Vagina (tissue), 2 donors: ENCODE measurements at regions of chrX and their contacts with region 1.

Region 1: DNA sequence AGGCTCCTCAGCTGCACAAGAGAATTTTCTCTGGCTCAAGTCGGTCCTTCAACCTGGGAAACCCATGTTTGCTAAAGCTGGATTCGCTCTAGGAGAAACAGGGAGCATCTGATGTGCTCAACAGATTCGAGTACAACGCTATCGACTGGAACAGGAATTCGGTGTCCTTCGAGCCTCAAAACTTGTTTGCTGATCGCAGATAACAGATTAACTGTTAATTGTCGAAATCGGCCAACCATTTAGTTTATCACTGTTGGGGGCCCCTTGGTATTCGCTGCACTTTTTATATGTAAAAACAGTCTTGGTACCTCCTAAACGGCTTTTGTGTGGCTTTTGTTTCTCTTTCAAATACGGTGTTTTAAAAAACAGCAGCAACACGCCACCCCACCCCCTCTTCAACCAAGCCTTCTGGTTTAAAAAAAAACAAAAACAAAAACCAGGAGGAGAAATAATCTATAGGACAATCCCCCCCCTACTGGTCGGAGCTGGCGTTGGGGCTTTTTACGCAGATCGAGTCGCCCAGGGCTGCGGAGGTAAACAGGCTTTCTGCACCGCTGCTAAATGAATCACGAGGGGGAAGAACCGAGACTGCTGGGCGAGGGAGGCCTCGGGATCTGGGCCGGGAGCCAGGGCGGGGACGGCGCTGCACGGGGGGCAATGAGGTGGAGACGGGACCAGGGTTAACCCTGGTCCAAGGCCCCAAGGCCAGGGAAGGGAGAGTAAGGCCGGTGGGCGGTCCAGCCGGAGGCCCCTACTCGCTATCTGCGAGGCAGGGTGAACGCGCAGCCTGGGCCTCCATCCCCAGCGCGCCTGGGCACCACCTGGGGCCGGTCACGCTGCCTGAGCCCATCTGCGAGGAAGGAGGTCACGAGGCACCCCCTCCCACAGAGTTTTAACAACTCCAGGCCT is 71.7 kb upstream of the BCOR start:
- DNase-seq: no peak
- H3K4me3 ChIP-seq: no peak overlapping the region
- H3K27ac ChIP-seq: peak overlapping the region; percentile 42
- H3K4me1 ChIP-seq: peaks cover 51% of the 10 kb centered on the region
- H3K27me3 ChIP-seq: no peaks in the 10 kb centered on the region
- CTCF ChIP-seq: no peak
- POLR2A ChIP-seq: no peak

Region 2: GRCh38 chrX:38192007-38192810 is 1977.2 kb before region 1 on chrX:
- intact Hi-C with region 1: no loop called
- DNase-seq: no peak
- H3K4me3 ChIP-seq: no peak overlapping the region
- H3K27ac ChIP-seq: no peak overlapping the region
- H3K4me1 ChIP-seq: no peaks in the 10 kb centered on the region
- H3K27me3 ChIP-seq: no peaks in the 10 kb centered on the region
- CTCF ChIP-seq: no peak
- POLR2A ChIP-seq: no peak

Region 3: GRCh38 chrX:40006106-40007017 is 163.1 kb before region 1 on chrX:
- intact Hi-C with region 1: loop called (anchors 5 kb)
- DNase-seq: no peak
- H3K4me3 ChIP-seq: peak overlapping the region; percentile 2 to 12
- H3K27ac ChIP-seq: no peak overlapping the region
- H3K4me1 ChIP-seq: peaks cover 21% of the 10 kb centered on the region
- H3K27me3 ChIP-seq: no peaks in the 10 kb centered on the region
- CTCF ChIP-seq: no peak
- POLR2A ChIP-seq: no peak

Region 4: DNA sequence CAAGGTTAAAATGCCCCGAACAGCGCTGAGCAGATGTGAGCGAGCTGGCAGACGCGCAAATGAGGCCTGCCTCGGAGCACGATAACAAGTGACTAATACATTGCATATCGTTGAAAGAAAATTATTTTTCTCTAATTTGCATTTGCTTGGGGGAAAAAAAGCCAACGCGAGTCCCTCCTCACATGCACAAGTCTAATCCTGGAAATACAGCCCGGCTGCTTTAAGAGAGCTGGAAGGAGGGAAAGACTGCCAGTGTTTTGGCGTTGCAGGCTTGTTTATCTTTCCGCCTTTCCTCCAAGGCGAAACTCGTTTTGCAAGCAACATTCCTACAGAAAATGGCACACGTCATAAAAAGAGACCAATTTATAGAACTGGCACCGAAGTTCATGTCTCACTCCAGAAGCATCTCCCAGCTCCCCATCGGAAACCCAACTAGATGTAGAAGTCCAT is 84.3 kb before region 1 on chrX:
- intact Hi-C with region 1: loop called (anchors 5 kb)
- DNase-seq: no peak
- H3K4me3 ChIP-seq: no peak overlapping the region
- H3K27ac ChIP-seq: no peak overlapping the region
- H3K4me1 ChIP-seq: peaks cover 68% of the 10 kb centered on the region
- H3K27me3 ChIP-seq: peaks cover 3% of the 10 kb centered on the region
- CTCF ChIP-seq: no peak
- POLR2A ChIP-seq: no peak

Region 5: GRCh38 chrX:40108959-40109287 is 60.5 kb before region 1 on chrX:
- intact Hi-C with region 1: loop called (anchors 5 kb)
- DNase-seq: no peak
- H3K4me3 ChIP-seq: peak overlapping the region; percentile 45 to 64
- H3K27ac ChIP-seq: peak overlapping the region; percentile 71
- H3K4me1 ChIP-seq: peaks cover 35% of the 10 kb centered on the region
- H3K27me3 ChIP-seq: no peaks in the 10 kb centered on the region
- CTCF ChIP-seq: no peak
- POLR2A ChIP-seq: peak in 1 of 2 donors; percentile 3